Left cardiac atrium (tissue), 4 donors: ENCODE measurements at regions of chr20 and their contacts with region 1.

Region 1: GRCh38 chr20:11676630-11677284 is 240.9 kb upstream of the BTBD3 start:
- DNase-seq: peak; percentile 23
- ATAC-seq: peak; percentile 90 to 91

Region 2: GRCh38 chr20:11726026-11726425 is 49.3 kb after region 1 on chr20:
- intact Hi-C with region 1: no loop called
- DNase-seq: no peak
- ATAC-seq: no peak

Region 3: GRCh38 chr20:12207875-12208274 is 531.1 kb after region 1 on chr20:
- intact Hi-C with region 1: loop called (anchors 5 to 10 kb)
- DNase-seq: no peak
- ATAC-seq: peak in 1 of 2 donors; percentile 14

Region 4: DNA sequence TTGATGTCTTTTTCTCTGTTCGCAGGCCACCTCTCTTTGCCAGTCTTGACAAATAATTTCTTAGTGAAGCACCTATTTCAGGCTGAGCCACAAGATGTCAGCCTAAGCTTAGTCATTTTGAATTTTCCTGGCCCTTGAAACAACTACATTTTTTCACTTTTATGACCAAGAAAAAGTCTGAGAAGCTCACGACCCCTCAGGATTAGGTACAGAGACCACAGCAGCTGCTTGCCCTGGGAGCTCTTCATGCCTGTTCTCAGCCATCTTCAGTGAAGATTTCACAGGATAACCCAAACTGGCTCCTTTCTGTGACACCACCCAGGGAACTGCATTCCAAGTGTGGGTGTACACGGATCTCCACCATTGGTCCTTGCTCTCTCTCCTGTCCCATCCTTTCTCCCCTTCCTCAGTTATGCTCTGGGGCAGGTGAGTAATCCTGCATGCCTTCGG is 1293.6 kb after region 1 on chr20:
- intact Hi-C with region 1: loop called in 1 of 2 experiments (anchors 5 kb)
- DNase-seq: no peak
- ATAC-seq: peak; percentile 47 to 58

Region 5: DNA sequence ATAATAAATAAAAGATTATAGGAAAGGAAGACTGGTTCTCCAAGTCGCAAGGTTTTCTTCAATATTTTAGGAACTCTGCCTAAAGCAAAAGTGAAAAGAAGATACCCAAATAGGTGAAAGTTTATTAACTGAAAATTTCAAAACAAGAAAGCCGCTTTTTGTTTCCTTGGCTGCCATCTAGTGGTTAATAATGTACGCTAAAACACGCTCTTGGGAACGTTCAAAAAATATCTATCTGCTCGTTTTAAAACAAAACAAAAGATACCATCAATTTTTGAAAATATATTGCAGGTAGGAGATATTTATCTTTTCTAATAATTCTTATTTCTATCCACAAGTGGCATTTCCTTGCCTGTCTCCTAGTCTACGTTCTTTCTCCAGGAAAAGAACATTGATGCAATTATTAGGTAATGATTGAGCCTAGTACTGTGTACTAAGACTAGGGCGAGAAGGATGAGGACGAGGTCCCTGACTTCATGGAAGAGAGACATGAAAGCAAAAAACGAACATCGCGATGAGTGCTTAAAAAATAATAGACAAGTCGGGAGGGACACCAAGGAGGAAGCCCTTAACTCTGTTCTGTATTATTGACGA is 1429.2 kb after region 1 on chr20:
- intact Hi-C with region 1: loop called in 1 of 2 experiments (anchors 10 kb)
- DNase-seq: no peak
- ATAC-seq: peak in 1 of 2 donors; percentile 34